Activated CD4-positive, alpha-beta T cell treated with anti-CD3 and anti-CD28 coated beads, Interleukin-2, amount 10 ng/mL, durations not matched to agents 24 days and 14 days (primary cell): ENCODE measurements at regions of chr11 and their contacts with region 1.

Region 1: DNA sequence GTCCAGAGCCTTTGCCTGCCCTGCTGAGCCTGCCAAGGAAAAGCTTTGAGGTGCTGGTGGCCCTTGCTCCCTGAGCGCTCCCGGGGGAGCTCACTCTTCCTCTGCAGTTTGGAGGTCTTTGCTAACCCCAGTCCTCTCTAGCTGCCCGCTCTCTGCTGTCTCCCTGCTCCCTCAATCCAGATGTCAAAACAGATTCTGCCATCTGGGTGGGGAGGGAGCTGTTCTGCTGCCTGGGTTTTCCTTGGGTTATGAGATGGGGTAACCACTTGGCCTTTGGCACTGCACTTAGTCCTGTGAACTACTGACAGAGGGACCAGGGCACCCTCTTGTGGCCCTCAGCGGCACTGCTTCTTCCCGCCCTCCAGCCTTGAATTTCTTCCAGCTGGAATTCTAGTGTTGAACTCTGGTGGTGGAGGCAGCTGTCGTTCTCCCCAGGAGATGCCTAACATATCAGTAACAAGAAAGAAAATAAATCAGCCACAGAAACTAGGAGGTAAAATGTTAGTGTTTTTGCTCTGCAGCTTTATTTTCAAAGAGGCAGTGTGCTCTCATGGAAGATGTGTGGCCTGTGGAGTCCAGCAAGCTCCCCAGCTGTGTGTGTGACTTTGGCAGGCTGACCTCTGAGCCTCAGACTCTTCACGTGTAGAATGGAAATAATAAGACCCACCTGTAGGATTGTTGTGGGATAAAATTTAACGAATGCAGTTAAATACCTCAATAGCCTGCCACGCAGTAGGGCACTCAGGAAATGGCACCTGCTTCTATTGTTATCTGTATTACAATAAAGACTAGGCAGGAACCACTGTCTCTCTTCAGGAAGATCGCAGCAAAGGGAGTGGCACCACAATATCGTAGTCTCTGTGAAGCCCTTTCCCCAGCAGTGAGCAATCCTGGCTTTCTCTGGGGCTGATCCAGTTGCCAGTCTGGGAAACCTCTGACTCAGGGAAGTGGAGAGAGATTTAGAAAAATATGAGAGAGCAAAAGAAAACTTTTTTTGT is 23.4 kb downstream of the ARFGAP2 start:
- DNase-seq: peak; percentile 87
- H3K4me3 Mint-ChIP-seq: no peak overlapping the region
- H3K27ac Mint-ChIP-seq: no peak overlapping the region
- H3K4me1 Mint-ChIP-seq: peaks cover 16% of the 10 kb centered on the region
- H3K27me3 Mint-ChIP-seq: no peaks in the 10 kb centered on the region

Region 2: DNA sequence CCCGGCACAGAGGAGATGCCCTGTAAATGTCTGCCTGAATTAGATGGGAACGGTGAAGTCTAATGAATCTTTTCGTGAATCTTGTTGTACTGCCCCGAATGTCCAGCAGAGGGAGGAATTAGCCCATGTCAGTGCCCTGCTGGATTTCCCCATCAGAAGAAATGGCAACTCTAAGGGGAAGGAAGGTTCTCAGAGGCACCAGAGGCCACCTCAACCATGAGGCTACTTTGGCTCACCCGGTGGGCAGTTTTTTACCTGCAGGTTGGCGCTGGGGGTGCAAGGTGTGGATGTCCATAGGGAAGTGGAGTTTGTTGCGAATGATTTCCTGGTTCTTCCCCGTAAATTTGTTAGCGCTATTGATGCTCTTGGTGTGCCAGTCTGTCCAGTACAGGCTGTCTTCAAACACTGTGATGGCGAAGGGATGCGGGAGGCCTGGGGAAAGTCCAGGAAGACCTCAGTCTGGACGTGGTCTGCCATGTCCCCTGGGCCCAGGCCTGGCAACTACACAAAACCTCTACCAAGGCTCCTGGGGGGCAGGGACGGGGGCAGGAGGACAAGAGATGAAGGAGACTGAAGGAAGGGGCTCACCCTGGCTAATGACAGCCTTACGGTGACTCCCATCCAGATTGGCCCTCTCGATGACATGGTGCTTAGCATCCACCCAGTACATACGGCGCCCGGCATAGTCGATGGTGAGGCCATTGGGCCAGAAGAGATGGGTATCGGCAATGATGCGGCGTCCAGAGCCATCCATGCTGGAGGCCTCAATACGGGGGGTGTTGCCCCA is 263.4 kb before region 1 on chr11:
- intact Hi-C with region 1: loop called (anchors 1 kb)
- DNase-seq: peak; percentile 93
- H3K4me3 Mint-ChIP-seq: no peak overlapping the region
- H3K27ac Mint-ChIP-seq: no peak overlapping the region
- H3K4me1 Mint-ChIP-seq: peaks cover 3% of the 10 kb centered on the region
- H3K27me3 Mint-ChIP-seq: peaks cover 1% of the 10 kb centered on the region

Region 3: DNA sequence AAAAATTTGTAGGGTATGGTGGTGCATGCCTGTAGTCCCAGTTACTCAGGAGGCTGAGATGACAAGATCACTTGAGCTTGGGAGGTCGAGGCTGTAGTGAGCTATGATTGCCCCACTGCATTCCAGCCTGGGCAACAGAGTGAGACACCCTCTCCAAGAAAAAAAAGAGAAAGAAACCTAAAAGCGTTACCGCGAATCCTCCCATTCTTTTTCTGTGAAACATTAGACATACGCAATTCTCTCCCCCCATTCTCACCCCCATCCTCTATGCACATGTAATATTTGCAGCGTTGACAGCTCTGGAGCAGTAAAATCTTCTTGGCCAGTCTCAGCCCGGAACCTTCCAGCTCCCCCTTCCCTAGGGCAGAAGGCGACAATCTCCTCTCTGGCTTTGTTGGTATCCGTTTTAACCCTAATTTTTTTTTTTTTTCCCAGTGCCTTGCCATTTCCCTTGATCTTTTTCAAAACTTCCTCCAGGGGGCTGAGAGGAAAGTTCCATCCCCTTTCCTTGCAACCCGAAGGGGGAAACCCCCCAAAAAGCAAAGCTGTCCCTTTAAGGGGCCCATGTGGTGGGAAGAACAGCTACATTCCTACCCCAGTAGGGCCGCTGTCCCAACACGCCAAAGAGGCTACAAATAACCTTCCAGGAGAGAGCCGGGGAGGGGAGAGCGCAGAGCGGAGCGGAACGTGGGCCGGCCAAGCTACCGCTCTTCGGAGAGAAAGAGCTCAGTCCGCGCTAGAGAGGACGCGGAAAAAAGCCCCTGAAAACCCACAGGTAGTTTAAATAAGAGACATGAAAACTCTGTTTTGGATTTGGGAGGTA is 236.8 kb before region 1 on chr11:
- intact Hi-C with region 1: loop called (anchors 1 kb)
- DNase-seq: no peak
- H3K4me3 Mint-ChIP-seq: peak overlapping the region; percentile 70
- H3K27ac Mint-ChIP-seq: no peak overlapping the region
- H3K4me1 Mint-ChIP-seq: peaks cover 21% of the 10 kb centered on the region
- H3K27me3 Mint-ChIP-seq: peaks cover 71% of the 10 kb centered on the region

Region 4: GRCh38 chr11:47248664-47249377 is 95.6 kb after region 1 on chr11 and contains the start of gene ACP2:
- intact Hi-C with region 1: no loop called
- DNase-seq: peak; percentile 96
- H3K4me3 Mint-ChIP-seq: peak within 1 kb of the TSS; percentile 98
- H3K27ac Mint-ChIP-seq: peak within 1 kb of the TSS; percentile 98
- H3K4me1 Mint-ChIP-seq: peaks cover 14% of the 10 kb centered on the region
- H3K27me3 Mint-ChIP-seq: no peaks in the 10 kb centered on the region
- total RNA-seq, gene ACP2: 24.8 and 27.6 TPM in 2 replicates